Naive thymus-derived CD8-positive, alpha-beta T cell (primary cell): ENCODE measurements at regions of chr1 and their contacts with region 1.

Region 1: DNA sequence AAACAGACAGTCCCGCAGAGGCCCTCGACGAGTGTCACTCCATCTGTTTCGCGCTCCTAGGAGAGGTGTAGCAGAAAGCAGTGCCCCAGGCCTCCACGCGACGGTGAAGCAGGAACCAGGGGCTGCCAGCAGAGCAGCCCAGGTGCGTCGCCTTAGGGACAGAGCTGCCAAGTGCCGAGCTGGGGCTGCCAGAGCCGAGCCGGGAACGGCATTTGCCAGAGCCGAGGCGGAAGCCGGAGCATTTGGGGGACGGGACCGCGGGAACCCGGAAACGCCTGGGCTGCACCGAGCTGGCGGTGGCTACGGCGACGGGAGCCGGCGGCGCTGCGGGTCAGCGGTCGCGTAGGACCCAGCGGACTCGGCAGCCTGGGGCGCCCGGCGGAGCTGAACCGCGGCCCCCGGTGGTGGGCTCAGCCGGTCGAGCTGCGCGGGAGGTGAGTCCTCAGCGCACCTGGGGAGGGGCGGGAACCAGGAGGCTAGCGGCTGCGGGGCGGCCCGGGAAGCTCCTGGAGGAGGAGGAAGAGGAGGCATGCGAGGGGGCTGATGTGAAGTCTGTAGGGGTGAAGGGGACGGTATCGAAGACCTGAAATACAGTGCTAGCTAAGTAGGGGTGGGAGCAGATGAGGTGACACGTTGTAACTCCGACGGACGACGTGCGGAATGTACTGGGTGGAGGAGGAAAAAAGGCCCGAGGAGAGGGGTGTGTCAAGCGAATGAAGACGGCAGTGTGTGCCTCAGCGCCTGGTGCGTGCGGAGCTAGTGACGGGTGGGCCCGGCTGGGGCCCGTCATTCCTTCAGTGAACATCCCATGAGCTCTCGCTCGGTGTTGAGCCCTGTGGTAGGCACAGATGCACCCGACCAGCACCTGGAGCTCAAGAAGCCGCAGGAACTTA is at the start of gene SLC35A3:
- DNase-seq: peak; percentile 66 to 85 (median 77)
- ATAC-seq: peak; percentile 80 to 88
- H3K4me3 Mint-ChIP-seq: peak within 1 kb of the TSS; percentile 96 to 100 (median 99)
- H3K27ac Mint-ChIP-seq: peak within 1 kb of the TSS; percentile 88 to 100 (median 98)
- H3K4me1 Mint-ChIP-seq: peaks cover 14 to 43% (median 36%) of the 10 kb centered on the region in 4 donors
- H3K27me3 Mint-ChIP-seq: no peaks in the 10 kb centered on the region
- polyA plus RNA-seq, gene SLC35A3: 13.3 to 15.3 (median 15.1) TPM

Region 2: GRCh38 chr1:100132566-100133477 is 162.8 kb after region 1 on chr1 and contains the starts of genes SASS6 and TRMT13:
- POLR2A ChIA-PET with region 1: interaction called, 13 read pairs
- DNase-seq: peak; percentile 80 to 98 (median 92)
- ATAC-seq: peak; percentile 96 to 97
- H3K4me3 Mint-ChIP-seq: peak within 1 kb of the TSS; percentile 96 to 100 (median 99)
- H3K27ac Mint-ChIP-seq: peak within 1 kb of the TSS; percentile 95 to 99 (median 98)
- H3K4me1 Mint-ChIP-seq: peaks cover 12 to 47% (median 33%) of the 10 kb centered on the region in 4 donors
- H3K27me3 Mint-ChIP-seq: no peaks in the 10 kb centered on the region
- polyA plus RNA-seq, gene SASS6: 1.7 to 2.4 (median 1.8) TPM
- polyA plus RNA-seq, gene TRMT13: 8.7 to 12.7 (median 11.9) TPM